Heart left ventricle (tissue), 16 donors: ENCODE measurements at regions of chr2 and their contacts with region 1.

Region 1: GRCh38 chr2:70789304-70790135 is 923 bp downstream of the FIGLA start:
- DNase-seq: peak; percentile 52 to 74 (median 54)
- ATAC-seq: peak; percentile 54 to 88 (median 78)
- H3K4me3 ChIP-seq: peak overlapping the region in 11 of 12 donors; percentile 11 to 49 (median 34)
- H3K27ac ChIP-seq: no peak overlapping the region
- H3K4me1 ChIP-seq: peaks cover 0 to 32% (median 8%) of the 10 kb centered on the region in 12 donors
- H3K27me3 ChIP-seq: peaks cover 11 to 73% (median 32%) of the 10 kb centered on the region in 9 donors
- CTCF ChIP-seq: peak; percentile 44 to 71 (median 60)
- POLR2A ChIP-seq: no peak

Region 2: GRCh38 chr2:70656421-70657010 is 133.0 kb before region 1 on chr2:
- intact Hi-C with region 1: loop called in 9 of 10 experiments (anchors 2 to 10 kb)
- DNase-seq: no peak
- ATAC-seq: no peak
- H3K4me3 ChIP-seq: no peak overlapping the region
- H3K27ac ChIP-seq: no peak overlapping the region
- H3K4me1 ChIP-seq: no peaks in the 10 kb centered on the region
- H3K27me3 ChIP-seq: peaks cover 0 to 48% (median 7%) of the 10 kb centered on the region in 9 donors
- CTCF ChIP-seq: no peak
- POLR2A ChIP-seq: no peak

Region 3: GRCh38 chr2:70671092-70671675 is 118.3 kb before region 1 on chr2:
- intact Hi-C with region 1: no loop called
- DNase-seq: no peak
- ATAC-seq: no peak
- H3K4me3 ChIP-seq: no peak overlapping the region
- H3K27ac ChIP-seq: no peak overlapping the region
- H3K4me1 ChIP-seq: no peaks in the 10 kb centered on the region
- H3K27me3 ChIP-seq: no peaks in the 10 kb centered on the region
- CTCF ChIP-seq: no peak
- POLR2A ChIP-seq: no peak

Region 4: DNA sequence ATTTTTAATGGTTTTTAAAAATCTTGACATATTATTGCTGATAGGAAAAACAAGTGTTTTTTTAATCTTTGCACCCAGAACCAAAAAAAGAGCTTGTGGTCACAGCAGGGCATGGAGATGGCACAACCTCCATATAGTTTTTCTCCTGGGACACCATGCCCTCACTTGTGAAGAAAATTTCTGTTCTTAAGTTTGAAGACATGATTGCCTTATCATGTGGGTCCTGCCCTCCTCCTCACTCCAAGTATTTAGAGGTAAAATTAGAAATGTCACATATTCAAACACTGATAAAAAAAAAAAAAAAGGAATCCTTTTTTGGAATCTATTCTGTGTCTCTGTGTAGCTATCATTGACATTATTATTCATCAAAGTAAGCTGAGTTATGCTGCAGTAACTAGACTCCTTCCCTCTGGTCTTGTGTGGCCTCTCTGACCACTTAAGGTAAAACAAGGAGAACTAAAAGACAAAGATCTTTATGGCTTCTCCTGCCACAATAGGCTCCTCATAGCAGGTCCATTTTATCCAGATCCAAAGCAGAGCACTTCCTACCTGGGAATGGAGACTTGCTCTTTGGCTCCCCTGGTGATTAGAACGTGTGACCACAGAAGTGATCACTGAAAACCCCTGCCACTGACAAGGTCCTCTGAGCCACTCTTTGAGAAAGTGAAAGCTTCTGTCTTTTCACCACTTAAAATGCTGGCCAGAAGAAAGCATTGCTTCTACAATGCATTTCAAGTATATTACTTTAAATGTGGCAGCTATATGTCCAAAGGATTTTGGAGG is 41.3 kb before region 1 on chr2:
- intact Hi-C with region 1: no loop called
- DNase-seq: no peak
- ATAC-seq: no peak
- H3K4me3 ChIP-seq: no peak overlapping the region
- H3K27ac ChIP-seq: no peak overlapping the region
- H3K4me1 ChIP-seq: no peaks in the 10 kb centered on the region
- H3K27me3 ChIP-seq: peaks cover 0 to 5% (median 0%) of the 10 kb centered on the region in 9 donors
- CTCF ChIP-seq: no peak
- POLR2A ChIP-seq: no peak

Region 5: DNA sequence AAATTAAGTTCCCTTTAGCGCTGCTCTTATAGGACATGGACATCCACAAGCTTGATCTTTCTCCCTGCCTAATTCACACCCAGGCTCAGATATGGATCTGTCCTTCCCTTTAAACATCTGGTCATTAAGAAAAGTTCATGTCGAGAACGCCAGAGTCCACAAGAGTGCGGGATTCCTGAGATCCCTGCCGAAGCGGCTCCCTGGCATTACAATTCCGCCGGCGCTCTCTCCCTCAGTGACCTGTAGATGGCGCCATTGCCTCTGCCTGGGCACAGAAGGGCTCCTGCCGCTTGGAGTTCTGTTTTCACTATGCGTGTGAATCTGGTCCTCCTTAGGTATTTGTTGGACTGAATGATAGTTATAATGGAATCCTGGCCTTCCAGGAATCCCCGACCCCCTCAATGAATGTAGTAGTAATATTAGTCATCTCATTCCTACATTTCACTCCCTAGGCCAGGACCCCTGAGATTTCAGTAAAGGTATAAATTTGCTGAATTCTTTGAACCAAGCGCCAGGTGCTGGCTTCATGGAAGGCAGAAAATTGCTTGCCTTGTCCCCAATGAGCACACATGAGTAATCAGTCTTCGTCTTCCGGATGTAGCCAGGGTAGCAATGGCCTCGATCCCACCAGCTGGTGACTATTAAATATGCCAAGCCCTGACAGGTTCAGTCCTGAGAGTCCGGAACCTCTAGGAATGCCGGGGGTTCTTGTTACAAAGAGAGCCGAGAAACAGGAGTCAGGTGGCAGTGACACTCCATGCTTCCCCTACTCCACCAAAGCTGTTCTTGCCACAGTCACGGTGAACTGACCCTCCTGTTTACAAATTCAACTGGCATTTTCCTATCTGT is 72.5 kb after region 1 on chr2:
- intact Hi-C with region 1: loop called in 4 of 10 experiments (anchors 2 to 10 kb)
- DNase-seq: peak; percentile 70 to 83 (median 76)
- ATAC-seq: peak in 3 of 4 donors; percentile 86 to 89 (median 88)
- H3K4me3 ChIP-seq: no peak overlapping the region
- H3K27ac ChIP-seq: no peak overlapping the region
- H3K4me1 ChIP-seq: peaks cover 0 to 5% (median 0%) of the 10 kb centered on the region in 12 donors
- H3K27me3 ChIP-seq: peaks cover 3 to 52% (median 19%) of the 10 kb centered on the region in 9 donors
- CTCF ChIP-seq: peak; percentile 89 to 99 (median 95)
- POLR2A ChIP-seq: no peak

Region 6: GRCh38 chr2:70935468-70936164 is 146.1 kb after region 1 on chr2 and contains the start of gene ATP6V1B1:
- intact Hi-C with region 1: loop called in 6 of 10 experiments (anchors 5 to 10 kb)
- DNase-seq: no peak
- ATAC-seq: peak in 1 of 4 donors; percentile 5
- H3K4me3 ChIP-seq: no peak within 1 kb of the TSS
- H3K27ac ChIP-seq: no peak within 1 kb of the TSS
- H3K4me1 ChIP-seq: no peaks in the 10 kb centered on the region
- H3K27me3 ChIP-seq: peaks cover 0 to 17% (median 4%) of the 10 kb centered on the region in 9 donors
- CTCF ChIP-seq: no peak
- POLR2A ChIP-seq: no peak
- total RNA-seq, gene ATP6V1B1: 0.16 to 0.60 (median 0.48) TPM in 5 of 9 donors, not detected in the others